A549 (cell line): ENCODE measurements at regions of chr2 and their contacts with region 1.

Region 1: GRCh38 chr2:231706731-231707624 is 1.3 kb upstream of the PTMA start:
- DNase-seq: peak; percentile 94 to 99
- ATAC-seq: peak; percentile 56 to 74
- H3K4me3 ChIP-seq: peak overlapping the region; percentile 66
- H3K27ac ChIP-seq: peak overlapping the region; percentile 94 to 97
- H3K4me1 ChIP-seq: peaks cover 20% of the 10 kb centered on the region
- CTCF ChIP-seq: peak; percentile 94
- EP300 ChIP-seq: no peak
- POLR2A ChIP-seq: peak; percentile 29; the same call in 1 of the 2 replicates
- RAD21 ChIP-seq: no peak

Region 2: DNA sequence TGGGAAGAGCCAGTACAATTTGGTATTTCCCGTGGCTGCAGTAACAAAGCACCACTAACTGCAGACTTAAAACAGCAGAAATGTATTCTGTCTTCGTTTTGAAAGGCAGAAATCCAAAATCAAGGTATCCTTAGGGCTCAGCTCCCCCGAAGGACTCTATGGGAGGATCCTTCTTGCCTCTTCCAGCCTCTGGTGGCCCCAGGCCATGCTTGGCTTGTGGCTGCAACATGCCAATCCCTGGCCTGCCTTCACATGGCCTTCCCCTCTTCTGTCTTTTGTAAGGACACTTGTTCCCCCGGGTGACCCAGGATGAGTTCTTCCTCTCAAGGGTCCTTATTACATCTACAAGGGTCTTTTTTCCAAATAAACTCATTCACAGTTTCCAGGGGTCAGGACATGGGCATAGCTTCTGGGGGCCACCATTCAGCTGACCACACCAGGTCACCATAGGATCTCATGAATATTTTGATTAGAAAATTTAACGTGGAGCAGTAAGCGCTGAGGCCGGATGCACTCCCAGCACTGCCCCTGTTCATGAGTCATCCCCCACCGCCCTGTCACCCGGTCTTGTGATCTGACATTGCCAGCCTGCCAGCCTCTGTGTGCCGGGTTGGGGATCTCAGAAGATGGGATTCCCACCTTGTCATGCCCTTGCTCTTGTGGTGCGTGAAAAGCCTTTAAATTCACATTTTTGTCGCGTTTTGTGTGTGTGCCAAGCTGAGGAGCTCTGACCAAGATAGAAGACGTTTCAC is 372.6 kb before region 1 on chr2:
- CTCF ChIA-PET with region 1: no interaction called
- POLR2A ChIA-PET with region 1: no interaction called
- DNase-seq: no peak
- ATAC-seq: no peak
- H3K4me3 ChIP-seq: no peak overlapping the region
- H3K27ac ChIP-seq: no peak overlapping the region
- H3K4me1 ChIP-seq: no peaks in the 10 kb centered on the region
- CTCF ChIP-seq: no peak
- EP300 ChIP-seq: no peak
- POLR2A ChIP-seq: no peak
- RAD21 ChIP-seq: no peak

Region 3: DNA sequence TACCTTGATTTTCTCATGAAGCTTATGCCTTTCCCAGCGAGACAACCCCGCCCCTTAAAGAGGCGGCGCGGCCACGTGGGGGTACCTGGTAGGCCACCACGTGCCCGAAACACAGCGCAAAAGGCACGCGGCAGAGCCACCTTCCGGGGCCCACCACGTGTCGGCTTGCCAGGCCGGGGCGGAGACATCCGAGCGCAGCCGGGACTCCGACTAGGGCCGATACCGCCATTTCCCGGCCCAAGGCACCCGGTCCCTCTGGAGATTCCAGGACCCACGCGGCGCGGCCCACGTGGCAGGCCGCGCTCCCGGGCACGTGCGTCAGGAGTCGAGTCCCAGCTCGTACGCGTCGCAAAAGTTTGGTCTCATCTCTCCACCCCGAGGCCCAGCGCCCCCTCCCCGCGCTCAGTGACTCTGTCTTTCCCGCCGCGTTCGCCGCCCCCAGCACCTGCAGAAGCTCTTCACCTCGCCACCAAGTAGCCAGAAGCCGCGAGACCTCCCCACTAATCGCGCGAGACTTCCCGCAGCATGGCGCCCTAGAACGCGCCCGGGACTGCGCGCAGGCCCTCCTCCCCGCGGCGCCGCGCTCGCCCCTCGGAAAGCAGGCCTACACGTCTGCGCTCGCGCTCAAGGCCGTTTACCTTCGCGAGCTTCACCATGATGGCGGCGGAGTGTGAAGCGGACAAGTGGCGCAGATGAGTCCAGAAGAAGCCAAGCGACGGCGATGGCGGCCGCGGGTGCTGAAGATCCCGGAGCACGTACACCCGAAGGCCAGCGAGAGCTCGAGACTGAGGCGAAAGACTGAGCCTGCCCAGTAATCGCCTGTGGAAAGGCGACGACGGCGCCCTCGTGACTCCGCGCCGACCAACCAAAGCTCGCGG is 243.0 kb before region 1 on chr2 and contains the start of gene NCL:
- CTCF ChIA-PET with region 1: no interaction called
- POLR2A ChIA-PET with region 1: interaction called, 10 read pairs
- DNase-seq: peak; percentile 46 to 99
- ATAC-seq: peak; percentile 86 to 95
- H3K4me3 ChIP-seq: peak within 1 kb of the TSS; percentile 93
- H3K27ac ChIP-seq: peak within 1 kb of the TSS; percentile 96 to 99
- H3K4me1 ChIP-seq: peaks cover 39% of the 10 kb centered on the region
- CTCF ChIP-seq: no peak
- EP300 ChIP-seq: no peak
- POLR2A ChIP-seq: peak; percentile 99
- RAD21 ChIP-seq: no peak
- polyA plus RNA-seq, gene NCL: 390 and 456 TPM in 2 replicates

Region 4: DNA sequence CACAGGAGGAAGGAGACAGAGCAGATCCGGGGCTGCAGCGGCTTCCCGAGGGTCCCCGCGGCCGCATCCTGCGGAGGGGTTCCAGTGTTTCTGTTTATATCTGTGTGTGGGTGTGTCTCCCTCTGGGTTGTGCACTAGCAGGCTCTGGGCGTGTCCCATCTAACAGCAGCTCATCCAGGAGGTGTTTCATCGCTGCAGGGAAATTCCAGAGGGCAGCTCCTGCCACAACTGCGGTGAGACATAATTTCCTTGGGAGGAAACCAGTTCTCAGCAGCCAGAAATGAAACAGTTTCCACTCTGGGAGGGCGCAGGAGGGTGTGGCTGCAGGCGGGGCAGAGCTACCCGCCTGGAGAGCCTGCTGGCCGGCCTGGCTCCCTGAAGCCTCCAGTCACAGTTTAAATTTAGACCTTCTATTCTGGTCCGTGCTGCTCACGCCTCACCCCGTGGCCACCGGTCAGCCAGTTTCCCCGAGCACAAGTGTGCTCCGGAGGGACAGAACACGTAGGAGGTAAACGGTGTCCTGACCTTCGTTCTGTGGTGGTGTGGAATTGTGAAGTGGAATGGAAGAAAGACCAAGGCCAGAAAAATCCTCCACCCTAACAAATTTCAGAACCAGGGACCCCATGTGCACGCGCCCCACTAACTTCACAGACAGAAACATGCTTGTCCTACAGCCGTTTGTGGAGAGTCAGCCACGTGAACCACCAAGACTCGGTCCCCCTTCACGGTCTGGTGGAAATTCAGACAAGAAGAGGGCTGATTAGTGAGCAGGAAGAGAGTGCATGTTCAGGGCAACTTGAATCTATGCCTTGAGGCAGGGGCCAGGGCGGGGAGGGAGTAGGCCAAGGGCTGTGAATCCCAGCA is 64.1 kb before region 1 on chr2:
- CTCF ChIA-PET with region 1: interaction called, 4,158 read pairs
- POLR2A ChIA-PET with region 1: interaction called, 15 read pairs
- DNase-seq: peak; percentile 95 to 97
- ATAC-seq: peak; percentile 93
- H3K4me3 ChIP-seq: peak overlapping the region; percentile 16; the same call in 2 of the 3 replicates
- H3K27ac ChIP-seq: peak overlapping the region; percentile 93 to 96
- H3K4me1 ChIP-seq: peaks cover 49% of the 10 kb centered on the region
- CTCF ChIP-seq: no peak
- EP300 ChIP-seq: no peak; a peak in 1 of 5 replicates
- POLR2A ChIP-seq: peak; percentile 29; the same call in 1 of the 2 replicates
- RAD21 ChIP-seq: no peak

Region 5: GRCh38 chr2:231662028-231662810 is 44.8 kb before region 1 on chr2:
- CTCF ChIA-PET with region 1: interaction called, 4,158 read pairs
- POLR2A ChIA-PET with region 1: interaction called, 14 read pairs
- DNase-seq: peak; percentile 69 to 99
- ATAC-seq: peak; percentile 48 to 72
- H3K4me3 ChIP-seq: peak overlapping the region; percentile 40
- H3K27ac ChIP-seq: peak overlapping the region; percentile 88 to 100
- H3K4me1 ChIP-seq: peaks cover 20% of the 10 kb centered on the region
- CTCF ChIP-seq: no peak; the same call in 2 of the 3 replicates
- EP300 ChIP-seq: no peak
- POLR2A ChIP-seq: peak; percentile 51
- RAD21 ChIP-seq: 0 out of 5 replicates have a peak, but pooled peaks of 1 of the 2 experiments have one; percentile 34

Region 6: DNA sequence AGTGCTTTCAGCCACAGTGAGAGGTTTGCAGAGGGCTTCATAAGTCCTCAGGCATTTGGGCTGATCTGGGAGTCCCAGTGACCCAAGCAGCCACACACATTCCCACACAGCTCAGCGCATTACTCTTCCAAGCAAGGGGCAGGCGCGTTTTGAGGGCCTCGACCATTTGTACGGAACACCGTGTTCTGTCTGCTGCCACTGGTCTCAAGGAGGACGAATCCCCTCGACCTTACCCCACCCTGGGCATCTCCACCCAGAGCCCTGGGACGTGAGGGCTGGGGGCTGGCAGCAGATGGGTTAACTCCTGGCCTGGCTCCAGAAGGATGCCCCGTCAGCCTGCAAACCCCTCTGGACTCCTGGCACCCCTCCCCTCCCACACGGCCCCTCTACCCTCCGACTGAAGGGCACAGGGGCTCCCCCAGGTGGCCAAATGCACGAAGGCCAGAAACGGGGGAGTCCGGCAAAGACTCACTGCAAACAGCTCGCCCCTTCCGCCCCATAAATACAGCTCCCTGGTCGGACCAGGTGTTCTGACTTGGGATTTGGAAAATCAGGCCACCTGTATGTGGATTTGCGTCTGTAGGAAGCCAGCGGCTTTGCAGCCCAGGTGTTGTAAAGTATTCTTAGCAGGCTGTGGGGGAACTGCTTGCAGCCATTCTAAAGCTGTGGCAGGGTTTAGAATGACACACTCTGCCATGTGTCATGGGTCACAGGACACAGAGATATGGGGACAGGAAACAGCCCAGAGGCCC is 32.2 kb before region 1 on chr2:
- CTCF ChIA-PET with region 1: interaction called, 4,158 read pairs
- POLR2A ChIA-PET with region 1: interaction called, 45 read pairs
- DNase-seq: peak in 1 of 2 experiments; percentile 70
- ATAC-seq: peak; percentile 42 to 60
- H3K4me3 ChIP-seq: no peak overlapping the region
- H3K27ac ChIP-seq: peak overlapping the region; percentile 97
- H3K4me1 ChIP-seq: peaks cover 43% of the 10 kb centered on the region
- CTCF ChIP-seq: peak; percentile 81
- EP300 ChIP-seq: no peak
- POLR2A ChIP-seq: no peak
- RAD21 ChIP-seq: peak; percentile 75 to 79

Region 7: GRCh38 chr2:231680992-231681853 is 25.8 kb before region 1 on chr2:
- CTCF ChIA-PET with region 1: interaction called, 4,158 read pairs
- POLR2A ChIA-PET with region 1: interaction called, 45 read pairs
- DNase-seq: peak; percentile 74 to 78
- ATAC-seq: peak; percentile 79 to 84
- H3K4me3 ChIP-seq: peak overlapping the region; percentile 55
- H3K27ac ChIP-seq: peak overlapping the region; percentile 98
- H3K4me1 ChIP-seq: peaks cover 16% of the 10 kb centered on the region
- CTCF ChIP-seq: no peak
- EP300 ChIP-seq: no peak
- POLR2A ChIP-seq: peak; percentile 63
- RAD21 ChIP-seq: no peak

Region 8: GRCh38 chr2:231720987-231721966 is 14.3 kb after region 1 on chr2:
- CTCF ChIA-PET with region 1: interaction called, 70 read pairs
- POLR2A ChIA-PET with region 1: interaction called, 5 read pairs
- DNase-seq: no peak
- ATAC-seq: no peak
- H3K4me3 ChIP-seq: no peak overlapping the region
- H3K27ac ChIP-seq: no peak overlapping the region
- H3K4me1 ChIP-seq: peaks cover 16% of the 10 kb centered on the region
- CTCF ChIP-seq: no peak
- EP300 ChIP-seq: no peak
- POLR2A ChIP-seq: no peak; the same call in 1 of the 2 replicates
- RAD21 ChIP-seq: no peak

Region 9: DNA sequence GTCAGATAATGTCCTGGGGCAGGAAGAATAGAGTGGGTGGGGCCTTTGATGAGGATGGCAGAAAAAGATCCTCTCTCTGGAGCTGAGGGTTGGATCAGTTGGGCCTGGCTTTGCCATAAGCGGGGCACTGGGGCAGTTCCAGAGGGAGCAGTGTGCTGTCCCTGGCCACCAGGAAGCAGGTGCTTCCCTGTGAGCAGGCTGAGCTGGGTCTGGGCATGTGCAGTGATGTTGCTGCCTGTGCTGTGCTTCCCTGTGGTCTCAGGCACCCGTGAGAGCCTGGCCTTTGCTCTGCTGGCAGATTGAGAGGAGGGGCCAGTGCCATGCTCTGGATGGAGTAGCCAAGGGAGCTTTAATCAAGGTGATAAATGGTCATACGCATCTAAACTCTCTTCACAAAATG is 233.8 kb after region 1 on chr2:
- CTCF ChIA-PET with region 1: no interaction called
- POLR2A ChIA-PET with region 1: no interaction called
- DNase-seq: no peak
- ATAC-seq: peak in 1 of 2 experiments; percentile 60; a peak in 2 of 6 replicates
- H3K4me3 ChIP-seq: no peak overlapping the region
- H3K27ac ChIP-seq: no peak overlapping the region
- H3K4me1 ChIP-seq: no peaks in the 10 kb centered on the region
- CTCF ChIP-seq: no peak
- EP300 ChIP-seq: no peak
- POLR2A ChIP-seq: no peak
- RAD21 ChIP-seq: no peak